HepG2 (cell line): ENCODE measurements at regions of chr11 and their contacts with region 1.

Region 1: DNA sequence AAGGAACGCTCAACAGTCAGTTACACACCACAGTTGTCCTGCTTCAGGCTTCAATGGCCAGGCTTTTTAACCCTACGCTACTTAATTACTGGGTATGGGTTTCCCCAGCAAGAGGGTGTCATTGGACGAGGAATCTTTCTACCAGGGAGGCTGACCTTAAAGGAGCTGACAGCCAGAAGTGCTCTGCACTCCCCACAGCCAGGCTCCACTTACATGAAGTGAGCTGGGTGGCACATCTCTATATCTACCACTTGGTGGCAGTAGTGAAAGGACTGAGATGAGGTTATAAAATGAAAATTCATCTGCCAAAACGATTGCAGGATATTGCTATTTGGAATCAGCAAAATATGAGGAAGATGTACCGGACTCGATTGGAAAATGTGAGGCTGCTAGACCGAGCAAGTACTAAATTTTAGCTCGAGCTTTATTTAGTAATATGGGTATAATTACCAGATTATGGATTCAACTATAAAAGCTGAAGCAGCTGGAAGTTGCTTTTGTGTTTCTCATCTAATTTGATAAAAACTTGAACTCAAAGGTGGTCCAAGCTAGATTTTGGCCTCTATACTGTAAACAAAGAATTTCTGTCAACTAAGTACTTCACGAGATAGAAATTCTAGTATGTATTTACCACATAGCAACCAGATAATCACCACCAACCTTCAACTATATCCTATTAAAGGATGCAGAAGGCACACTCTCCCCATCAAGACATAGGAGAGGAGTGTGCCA is 53.9 kb upstream of the CEP126 start:
- DNase-seq: peak; percentile 56
- ATAC-seq: peak; percentile 84
- H3K4me3 ChIP-seq: no peak overlapping the region
- H3K27ac ChIP-seq: no peak overlapping the region
- H3K4me1 ChIP-seq: peaks cover 44% of the 10 kb centered on the region
- H3K27me3 ChIP-seq: no peaks in the 10 kb centered on the region
- CTCF ChIP-seq: peak; percentile 84
- EP300 ChIP-seq: no peak
- POLR2A ChIP-seq: no peak
- RAD21 ChIP-seq: peak; percentile 57

Region 2: GRCh38 chr11:101880222-101880621 is 19.4 kb after region 1 on chr11:
- CTCF ChIA-PET with region 1: interaction called, 54 read pairs
- POLR2A ChIA-PET with region 1: no interaction called
- in situ Hi-C with region 1: no loop called
- intact Hi-C with region 1: loop called (anchors 1 kb)
- DNase-seq: peak; percentile 75
- ATAC-seq: peak; percentile 76
- H3K4me3 ChIP-seq: no peak overlapping the region
- H3K27ac ChIP-seq: no peak overlapping the region
- H3K4me1 ChIP-seq: peaks cover 10% of the 10 kb centered on the region
- H3K27me3 ChIP-seq: 0 out of 5 replicates have a peak, but pooled peaks cover 0 to 6% of the 10 kb centered on the region in 2 experiments
- CTCF ChIP-seq: peak; percentile 67
- EP300 ChIP-seq: no peak
- POLR2A ChIP-seq: no peak
- RAD21 ChIP-seq: peak; percentile 46; the same call in 1 of the 2 replicates

Region 3: DNA sequence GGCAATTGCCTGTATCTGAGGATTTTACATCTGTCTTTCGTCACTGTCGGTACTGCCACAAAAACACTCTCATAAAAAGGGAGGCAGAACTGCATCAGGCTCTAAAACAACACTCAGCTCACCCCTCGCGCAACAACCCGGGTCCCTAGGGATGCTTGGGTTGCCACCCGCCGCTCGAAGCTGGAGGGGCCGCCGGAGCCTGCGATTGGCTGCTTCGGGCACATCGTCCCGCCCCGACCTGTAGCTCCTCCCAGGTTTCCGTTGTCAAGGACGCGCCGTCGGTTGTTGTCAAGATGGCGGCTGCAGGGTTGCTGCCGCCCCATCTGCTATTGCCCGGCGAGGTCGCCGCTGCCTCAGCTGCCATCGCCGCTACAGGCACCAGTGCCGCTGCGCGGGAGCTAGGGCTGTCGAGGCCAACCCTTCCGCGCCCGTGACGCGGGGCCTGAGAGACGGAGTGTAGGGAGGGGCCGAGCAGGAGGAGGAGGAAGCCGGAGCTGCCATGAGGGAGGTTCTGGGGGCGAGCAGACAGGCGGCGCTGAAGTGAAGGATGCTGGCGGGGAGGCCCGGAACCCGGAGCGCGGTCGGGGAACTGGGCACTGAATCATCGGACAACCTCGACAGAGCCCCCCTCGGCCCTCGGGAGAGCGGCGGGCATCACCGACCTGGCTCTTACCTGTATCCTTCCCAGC is 54.0 kb after region 1 on chr11 and contains the start of gene CEP126:
- CTCF ChIA-PET with region 1: interaction called, 3 read pairs
- POLR2A ChIA-PET with region 1: interaction called, 4 read pairs
- in situ Hi-C with region 1: loop called (anchors 10 kb)
- intact Hi-C with region 1: loop called (anchors 1 kb)
- DNase-seq: peak; percentile 84
- ATAC-seq: peak; percentile 95
- H3K4me3 ChIP-seq: peak within 1 kb of the TSS; percentile 78 to 85 (median 84)
- H3K27ac ChIP-seq: peak within 1 kb of the TSS; percentile 67
- H3K4me1 ChIP-seq: peaks cover 34% of the 10 kb centered on the region
- H3K27me3 ChIP-seq: no peaks in the 10 kb centered on the region
- CTCF ChIP-seq: peak; percentile 84
- EP300 ChIP-seq: no peak
- POLR2A ChIP-seq: peak; percentile 42; a peak in 3 of 4 replicates
- RAD21 ChIP-seq: peak; percentile 71
- total RNA-seq, gene CEP126: 1.4 and 1.8 TPM in 2 replicates

Region 4: DNA sequence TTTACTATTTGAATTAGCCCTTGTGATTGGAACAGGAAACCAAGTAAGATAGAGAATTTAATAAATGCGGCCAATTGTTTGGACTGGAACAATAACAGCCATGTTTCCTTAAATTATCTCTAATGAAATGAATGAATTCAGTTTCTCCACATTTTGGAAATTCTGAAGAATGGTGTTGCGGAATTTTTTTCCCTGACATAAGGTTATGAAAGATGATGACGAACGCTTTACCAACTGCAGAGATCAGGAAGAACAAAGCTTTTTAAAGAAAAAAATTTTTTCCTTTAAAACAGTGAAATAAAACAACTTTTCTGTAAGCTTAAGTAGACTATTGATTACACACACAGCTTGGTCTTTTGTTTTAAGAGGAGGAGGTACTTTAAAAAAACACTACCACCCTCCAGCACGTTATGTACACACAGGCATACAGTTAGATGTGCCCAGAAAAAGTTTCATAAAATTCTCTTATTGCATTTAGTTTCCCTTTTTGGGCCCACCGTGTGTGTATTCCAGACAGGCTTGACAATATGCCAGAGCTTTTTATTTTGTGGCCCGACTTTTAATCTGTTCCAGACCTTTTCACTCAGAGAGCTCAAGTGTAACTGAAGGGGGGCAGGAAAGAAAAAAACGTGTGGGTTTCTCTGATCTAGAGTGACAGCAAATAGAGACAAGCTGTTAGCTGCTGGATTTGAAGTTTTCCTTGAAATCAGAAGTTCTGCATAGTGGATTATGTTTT is 326.7 kb after region 1 on chr11:
- CTCF ChIA-PET with region 1: no interaction called
- POLR2A ChIA-PET with region 1: no interaction called
- in situ Hi-C with region 1: no loop called
- intact Hi-C with region 1: loop called (anchors 5 kb)
- DNase-seq: peak; percentile 41
- ATAC-seq: no peak
- H3K4me3 ChIP-seq: peak overlapping the region in 1 of 3 experiments; percentile 7; a peak in 1 of 6 replicates
- H3K27ac ChIP-seq: peak overlapping the region; percentile 72
- H3K4me1 ChIP-seq: peaks cover 87% of the 10 kb centered on the region
- H3K27me3 ChIP-seq: no peaks in the 10 kb centered on the region
- CTCF ChIP-seq: no peak
- EP300 ChIP-seq: peak in 1 of 2 experiments; percentile 21; a peak in 1 of 4 replicates
- POLR2A ChIP-seq: no peak
- RAD21 ChIP-seq: no peak